Transverse colon (tissue), 4 donors: ENCODE measurements at regions of chr1 and their contacts with region 1.

Region 1: GRCh38 chr1:207259391-207259790 is 62.1 kb upstream of the CD55 start:
- DNase-seq: peak; percentile 12
- H3K4me3 ChIP-seq: no peak overlapping the region
- H3K27ac ChIP-seq: no peak overlapping the region
- H3K4me1 ChIP-seq: no peaks in the 10 kb centered on the region
- H3K27me3 ChIP-seq: no peaks in the 10 kb centered on the region
- CTCF ChIP-seq: peak; percentile 35 to 73 (median 55)
- EP300 ChIP-seq: no peak
- POLR2A ChIP-seq: no peak

Region 2: DNA sequence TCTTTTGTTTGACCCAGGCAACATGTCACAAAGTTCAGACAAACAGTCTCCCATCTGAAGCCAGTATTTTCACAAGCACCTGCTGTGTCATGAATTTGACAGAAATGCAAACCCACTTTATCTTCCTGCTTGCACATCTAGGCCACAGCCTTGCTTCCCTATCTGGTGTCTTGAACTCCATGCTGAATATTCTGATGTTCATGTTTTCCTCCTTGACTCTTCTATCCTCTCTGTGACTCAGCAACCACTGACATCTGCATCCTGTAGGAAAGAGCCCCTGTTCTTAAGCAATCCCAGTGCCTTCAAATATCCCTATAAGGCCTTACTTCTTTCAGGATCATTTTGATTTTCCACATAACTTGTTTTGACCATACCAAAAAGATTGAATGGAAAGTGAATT is 68.6 kb after region 1 on chr1:
- in situ Hi-C with region 1: no loop called
- intact Hi-C with region 1: loop called (anchors 2 kb)
- DNase-seq: no peak
- H3K4me3 ChIP-seq: no peak overlapping the region
- H3K27ac ChIP-seq: no peak overlapping the region
- H3K4me1 ChIP-seq: peaks cover 0 to 14% (median 7%) of the 10 kb centered on the region in 4 donors
- H3K27me3 ChIP-seq: no peaks in the 10 kb centered on the region
- CTCF ChIP-seq: no peak
- EP300 ChIP-seq: no peak
- POLR2A ChIP-seq: no peak